Adrenal gland (tissue), 19 donors: ENCODE measurements at regions of chr1 and their contacts with region 1.

Region 1: GRCh38 chr1:235866913-235867845 is 473 bp upstream of the LYST start:
- DNase-seq: peak; percentile 95 to 98 (median 96)
- H3K4me3 ChIP-seq: peak overlapping the region; percentile 50 to 96 (median 80)
- H3K27ac ChIP-seq: peak overlapping the region; percentile 89 to 94 (median 91)
- H3K4me1 ChIP-seq: peaks cover 11 to 43% of the 10 kb centered on the region in 2 donors
- H3K27me3 ChIP-seq: no peaks in the 10 kb centered on the region
- CTCF ChIP-seq: no peak
- POLR2A ChIP-seq: peak; percentile 81 to 82

Region 2: GRCh38 chr1:235971571-235972310 is 104.6 kb after region 1 on chr1:
- intact Hi-C with region 1: loop called in 1 of 2 experiments (anchors 5 kb)
- DNase-seq: peak; percentile 90 to 96 (median 93)
- H3K4me3 ChIP-seq: peak overlapping the region in 1 of 4 donors; percentile 47
- H3K27ac ChIP-seq: peak overlapping the region; percentile 84 to 96 (median 89)
- H3K4me1 ChIP-seq: peaks cover 0 to 10% of the 10 kb centered on the region in 2 donors
- H3K27me3 ChIP-seq: no peaks in the 10 kb centered on the region
- CTCF ChIP-seq: peak; percentile 50 to 88 (median 82)
- POLR2A ChIP-seq: peak; percentile 21 to 72

Region 3: DNA sequence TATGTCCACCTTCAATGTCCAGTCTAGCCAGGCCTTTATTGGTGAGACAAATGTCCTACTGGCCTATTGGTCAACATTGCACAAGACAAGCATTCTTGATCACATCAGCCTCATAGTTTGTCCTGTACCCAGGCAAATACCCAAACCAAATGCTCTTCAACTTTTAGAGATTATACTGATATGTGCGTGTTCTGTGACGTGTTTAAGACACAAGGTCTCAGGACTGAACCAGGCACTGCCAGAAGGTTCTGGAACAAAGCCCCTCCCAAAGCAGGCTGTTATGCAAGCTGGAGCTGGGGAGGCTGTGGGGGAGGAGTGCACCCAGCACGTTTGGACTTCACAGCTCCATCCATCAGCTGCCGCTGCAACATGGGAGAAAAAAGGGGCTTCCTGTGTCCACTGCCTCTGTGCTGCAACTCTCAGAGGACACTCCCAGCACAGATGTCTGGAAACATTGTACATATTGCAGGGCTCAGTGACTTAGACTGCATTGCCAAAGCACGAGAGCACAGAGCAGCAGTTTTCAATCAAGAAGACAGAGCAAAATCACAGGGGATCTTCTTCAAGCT is 151.8 kb after region 1 on chr1:
- intact Hi-C with region 1: no loop called
- DNase-seq: peak; percentile 25 to 85 (median 66)
- H3K4me3 ChIP-seq: no peak overlapping the region
- H3K27ac ChIP-seq: peak overlapping the region in 2 of 5 donors; percentile 81 to 95
- H3K4me1 ChIP-seq: no peaks in the 10 kb centered on the region
- H3K27me3 ChIP-seq: no peaks in the 10 kb centered on the region
- CTCF ChIP-seq: no peak
- POLR2A ChIP-seq: no peak